SK-N-SH (cell line): ENCODE measurements at regions of chr22 and their contacts with region 1.

Region 1: GRCh38 chr22:31107178-31107893 is at the start of gene SELENOM:
- DNase-seq: peak; percentile 98
- H3K4me3 ChIP-seq: peak within 1 kb of the TSS; percentile 86 to 94
- H3K27ac ChIP-seq: peak within 1 kb of the TSS; percentile 67 to 85
- H3K4me1 ChIP-seq: peaks cover 0 to 13% of the 10 kb centered on the region in 2 experiments; a peak in 1 of 4 replicates
- H3K27me3 ChIP-seq: no peaks in the 10 kb centered on the region
- CTCF ChIP-seq: peak; percentile 98
- EP300 ChIP-seq: no peak
- RAD21 ChIP-seq: peak; percentile 92
- polyA plus RNA-seq, gene SELENOM: 97.1 and 117 TPM in 2 replicates

Region 2: GRCh38 chr22:30830907-30831306 is 276.4 kb before region 1 on chr22:
- CTCF ChIA-PET with region 1: no interaction called
- POLR2A ChIA-PET with region 1: no interaction called
- DNase-seq: no peak
- H3K4me3 ChIP-seq: no peak overlapping the region
- H3K27ac ChIP-seq: peak overlapping the region in 1 of 2 experiments; percentile 81; a peak in 2 of 4 replicates
- H3K4me1 ChIP-seq: peaks cover 8 to 10% of the 10 kb centered on the region in 2 experiments; a peak in 2 of 4 replicates
- H3K27me3 ChIP-seq: no peaks in the 10 kb centered on the region
- CTCF ChIP-seq: no peak
- EP300 ChIP-seq: no peak; a peak in 1 of 4 replicates
- RAD21 ChIP-seq: no peak

Region 3: DNA sequence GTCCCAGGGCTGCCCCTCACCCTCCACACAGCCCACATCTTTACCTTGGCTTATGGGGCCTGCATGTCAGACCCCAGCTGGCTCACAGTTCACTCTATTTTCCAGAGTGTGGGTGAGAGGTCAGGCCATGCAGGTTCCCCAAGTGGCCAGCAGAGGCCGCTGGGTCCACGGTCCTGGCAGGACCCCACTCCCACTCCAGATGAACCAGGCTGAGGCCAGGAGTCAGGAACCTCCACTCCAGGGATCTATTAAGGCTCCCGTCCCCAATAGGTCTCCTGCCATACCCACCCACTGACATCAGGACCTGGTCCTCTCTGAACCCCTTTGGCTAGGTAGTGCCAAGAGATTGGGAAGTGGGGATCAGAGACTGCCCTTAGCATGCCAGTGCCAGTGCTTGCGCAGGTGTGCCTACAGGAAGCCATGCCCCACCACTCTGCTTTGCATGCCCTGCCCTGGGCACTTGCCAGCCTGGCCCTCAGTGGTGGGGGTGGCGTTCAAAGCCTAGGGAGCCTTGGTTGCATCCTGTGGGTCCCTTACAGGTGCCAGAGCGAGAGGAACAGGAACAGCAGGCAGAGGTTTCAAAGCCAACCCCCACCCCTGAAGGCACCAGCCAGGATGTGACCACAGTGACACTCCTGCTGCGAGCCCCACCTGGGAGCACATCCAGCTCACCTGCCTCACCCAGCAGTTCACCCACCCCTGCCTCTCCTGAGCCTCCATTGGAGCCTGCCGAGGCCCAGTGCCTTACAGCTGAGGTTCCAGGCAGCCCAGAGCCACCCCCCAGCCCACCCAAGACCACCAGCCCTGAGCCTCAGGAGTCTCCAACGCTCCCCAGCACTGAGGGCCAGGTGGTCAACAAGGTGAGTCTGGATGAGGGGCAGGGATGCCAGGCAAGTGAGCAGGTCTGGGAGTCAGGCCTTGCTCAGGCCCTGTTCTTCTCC is 17.9 kb before region 1 on chr22:
- CTCF ChIA-PET with region 1: interaction called, 85 read pairs
- POLR2A ChIA-PET with region 1: interaction called, 6 read pairs
- DNase-seq: peak; percentile 90
- H3K4me3 ChIP-seq: no peak overlapping the region; a peak in 1 of 4 replicates
- H3K27ac ChIP-seq: no peak overlapping the region
- H3K4me1 ChIP-seq: peaks cover 0 to 6% of the 10 kb centered on the region in 2 experiments; a peak in 2 of 4 replicates
- H3K27me3 ChIP-seq: no peaks in the 10 kb centered on the region
- CTCF ChIP-seq: peak; percentile 89
- EP300 ChIP-seq: no peak
- RAD21 ChIP-seq: peak; percentile 81

Region 4: GRCh38 chr22:31122532-31123291 is 15.4 kb after region 1 on chr22 and contains the start of gene INPP5J:
- CTCF ChIA-PET with region 1: interaction called, 52 read pairs
- POLR2A ChIA-PET with region 1: interaction called, 4 read pairs
- DNase-seq: peak; percentile 90
- H3K4me3 ChIP-seq: peak within 1 kb of the TSS; percentile 72 to 79
- H3K27ac ChIP-seq: peak within 1 kb of the TSS in 1 of 2 experiments; percentile 72; a peak in 1 of 4 replicates
- H3K4me1 ChIP-seq: peaks cover 0 to 45% of the 10 kb centered on the region in 2 experiments; a peak in 1 of 4 replicates
- H3K27me3 ChIP-seq: no peaks in the 10 kb centered on the region
- CTCF ChIP-seq: no peak
- EP300 ChIP-seq: no peak
- RAD21 ChIP-seq: no peak
- polyA plus RNA-seq, gene INPP5J: 3.2 TPM in 2 replicates

Region 5: GRCh38 chr22:31130873-31131272 is 23.5 kb after region 1 on chr22:
- CTCF ChIA-PET with region 1: interaction called, 52 read pairs
- POLR2A ChIA-PET with region 1: no interaction called
- DNase-seq: peak; percentile 48
- H3K4me3 ChIP-seq: no peak overlapping the region
- H3K27ac ChIP-seq: no peak overlapping the region
- H3K4me1 ChIP-seq: peaks cover 0 to 5% of the 10 kb centered on the region in 2 experiments; a peak in 1 of 4 replicates
- H3K27me3 ChIP-seq: no peaks in the 10 kb centered on the region
- CTCF ChIP-seq: no peak
- EP300 ChIP-seq: no peak
- RAD21 ChIP-seq: no peak

Region 6: DNA sequence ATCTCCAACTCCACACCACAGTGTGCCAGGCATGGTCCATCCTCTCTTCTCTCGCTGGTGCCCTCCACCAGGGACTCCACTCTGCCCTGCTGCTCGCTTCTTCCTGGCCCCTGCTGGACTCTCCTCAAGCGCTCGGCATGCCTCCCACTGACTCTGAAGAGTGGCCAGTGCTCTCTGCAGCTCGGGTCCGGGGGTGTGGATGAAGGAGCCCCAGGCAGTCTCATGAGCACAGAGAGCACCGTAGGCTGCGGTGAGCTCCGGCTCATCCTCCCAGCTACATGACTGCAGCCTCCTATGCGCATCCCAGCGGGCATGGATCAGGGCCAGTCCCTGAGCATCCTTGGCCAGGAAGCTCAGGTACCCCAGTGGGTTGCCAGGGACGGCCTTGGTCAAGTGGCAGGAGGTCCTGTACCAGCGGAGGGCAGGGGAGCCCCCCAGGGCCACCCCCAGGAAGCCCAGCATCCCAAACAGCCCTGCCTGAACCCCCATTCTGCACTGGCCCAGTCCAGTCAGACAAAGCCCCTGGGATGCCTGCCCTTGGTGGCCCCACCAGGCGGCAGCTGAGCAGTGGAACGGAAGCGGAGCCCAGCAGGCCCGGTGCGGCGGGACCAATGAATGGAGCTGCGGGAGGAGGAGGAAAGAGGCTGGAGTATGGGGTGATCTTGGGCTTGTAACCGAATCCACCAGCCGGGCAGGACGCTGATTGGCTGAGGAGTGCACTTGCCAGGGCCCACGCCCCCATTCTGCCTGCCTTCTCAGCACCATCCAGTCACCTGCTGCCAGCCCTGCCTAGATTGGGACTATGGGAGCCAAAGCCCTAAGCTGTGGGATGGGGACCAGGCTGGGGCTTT is 32.8 kb after region 1 on chr22 and contains the start of gene PLA2G3:
- CTCF ChIA-PET with region 1: interaction called, 19 read pairs
- POLR2A ChIA-PET with region 1: interaction called, 3 read pairs
- DNase-seq: peak; percentile 23
- H3K4me3 ChIP-seq: no peak within 1 kb of the TSS
- H3K27ac ChIP-seq: no peak within 1 kb of the TSS
- H3K4me1 ChIP-seq: peaks cover 0 to 32% of the 10 kb centered on the region in 2 experiments; a peak in 2 of 4 replicates
- H3K27me3 ChIP-seq: peaks cover 4% of the 10 kb centered on the region; the same call in 1 of the 2 replicates
- CTCF ChIP-seq: no peak
- EP300 ChIP-seq: no peak
- RAD21 ChIP-seq: no peak
- polyA plus RNA-seq, gene PLA2G3: not detected in 2 replicates

Region 7: GRCh38 chr22:31148953-31149627 is 41.8 kb after region 1 on chr22:
- CTCF ChIA-PET with region 1: interaction called, 44 read pairs
- POLR2A ChIA-PET with region 1: no interaction called
- DNase-seq: peak; percentile 88
- H3K4me3 ChIP-seq: no peak overlapping the region; a peak in 1 of 4 replicates
- H3K27ac ChIP-seq: no peak overlapping the region
- H3K4me1 ChIP-seq: no peaks in the 10 kb centered on the region
- H3K27me3 ChIP-seq: no peaks in the 10 kb centered on the region
- CTCF ChIP-seq: peak; percentile 89
- EP300 ChIP-seq: no peak
- RAD21 ChIP-seq: peak; percentile 99

Region 8: DNA sequence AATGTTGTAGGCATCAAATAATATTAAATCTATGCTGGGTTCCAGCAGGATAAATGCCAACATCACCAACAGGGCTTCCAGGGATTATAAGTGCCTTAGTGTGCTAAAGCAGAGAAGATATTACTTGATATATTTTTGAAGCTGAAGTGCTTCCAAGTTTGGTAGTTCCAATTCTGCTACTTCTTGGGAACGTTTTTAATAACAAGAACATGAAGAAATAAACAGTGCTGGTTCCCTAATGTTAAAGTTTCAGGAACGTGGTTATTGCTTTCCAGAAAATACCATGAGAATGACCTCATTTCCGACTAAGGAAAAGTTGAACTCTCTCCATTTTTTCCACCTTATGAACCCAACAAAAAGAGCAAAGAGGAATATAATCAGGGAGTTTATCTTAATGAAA is 48.1 kb after region 1 on chr22:
- CTCF ChIA-PET with region 1: interaction called, 17 read pairs
- POLR2A ChIA-PET with region 1: no interaction called
- DNase-seq: no peak
- H3K4me3 ChIP-seq: no peak overlapping the region
- H3K27ac ChIP-seq: peak overlapping the region in 1 of 2 experiments; percentile 78; a peak in 2 of 4 replicates
- H3K4me1 ChIP-seq: peaks cover 0 to 10% of the 10 kb centered on the region in 2 experiments; a peak in 2 of 4 replicates
- H3K27me3 ChIP-seq: no peaks in the 10 kb centered on the region
- CTCF ChIP-seq: no peak
- EP300 ChIP-seq: no peak
- RAD21 ChIP-seq: no peak